GM12878 (cell line): ENCODE measurements at regions of chr13 and their contacts with region 1.

Region 1: DNA sequence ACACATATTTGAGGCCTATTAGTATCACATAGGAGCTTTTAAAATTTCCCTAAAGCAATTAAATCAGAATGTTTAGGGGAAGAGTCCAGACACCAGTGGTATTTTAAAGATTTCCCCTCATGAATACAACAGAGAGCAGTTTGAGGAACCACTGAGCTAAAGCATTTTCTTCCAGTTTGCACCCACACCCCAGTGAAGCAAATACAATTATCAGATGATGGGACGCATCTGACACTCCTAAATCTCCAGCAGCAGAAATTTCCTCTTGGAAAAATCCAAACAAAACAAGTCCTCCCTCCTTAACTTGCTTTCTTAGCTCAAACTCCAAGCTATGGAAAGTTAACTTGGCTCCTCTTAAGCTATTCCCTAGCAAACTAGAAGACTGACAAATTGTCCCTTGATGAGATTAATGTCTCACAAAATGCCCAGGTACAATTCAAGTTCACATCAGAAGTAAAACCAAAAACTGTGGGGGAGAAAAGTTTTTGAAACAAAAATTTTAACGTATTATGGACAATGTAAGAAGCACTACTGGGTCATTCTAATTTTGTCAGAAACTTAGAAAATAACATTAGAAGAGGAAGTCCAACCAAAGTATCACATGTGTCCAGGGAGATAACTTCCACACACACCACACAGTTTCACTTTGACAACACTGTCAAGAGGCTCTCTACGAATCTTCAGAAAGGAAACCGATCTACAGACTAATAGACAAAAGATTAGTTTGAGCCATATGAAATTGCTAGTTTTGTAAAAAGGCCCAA is 74.1 kb downstream of the ABCC4 start:
- DNase-seq: peak; percentile 88
- ATAC-seq: peak; percentile 88
- H3K4me3 ChIP-seq: peak overlapping the region; percentile 49; the same call in 1 of the 2 replicates
- H3K27ac ChIP-seq: peak overlapping the region; percentile 98
- H3K4me1 ChIP-seq: peaks cover 37% of the 10 kb centered on the region
- H3K27me3 ChIP-seq: no peaks in the 10 kb centered on the region
- CTCF ChIP-seq: no peak
- EP300 ChIP-seq: peak; percentile 51 to 57
- POLR2A ChIP-seq: no peak
- RAD21 ChIP-seq: no peak

Region 2: DNA sequence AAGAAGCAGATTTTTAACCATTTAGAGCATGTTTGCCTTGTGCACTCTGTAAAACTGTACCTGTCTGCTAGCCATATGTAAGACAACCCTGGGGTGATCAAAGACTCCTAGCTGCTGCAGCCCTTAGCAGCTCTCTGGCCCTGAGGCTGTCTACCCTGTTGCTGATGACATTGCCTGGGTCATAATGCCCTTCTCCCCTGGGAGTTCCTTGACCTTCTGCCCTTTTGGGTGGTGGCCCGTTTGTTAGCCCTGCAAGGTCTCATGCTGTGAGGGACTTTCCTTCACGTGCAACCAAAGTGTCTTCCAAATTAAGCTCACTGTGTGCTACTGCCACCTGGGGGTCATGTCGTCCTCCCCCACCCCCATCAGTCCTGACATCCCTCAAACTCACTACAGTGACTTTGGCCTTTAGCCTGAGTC is 1993.1 kb before region 1 on chr13:
- CTCF ChIA-PET with region 1: no interaction called
- POLR2A ChIA-PET with region 1: no interaction called
- RAD21 ChIA-PET with region 1: no interaction called
- SMC1A ChIA-PET with region 1: no interaction called
- in situ Hi-C with region 1: no loop called
- intact Hi-C with region 1: no loop called
- DNase-seq: no peak
- ATAC-seq: peak; percentile 64
- H3K4me3 ChIP-seq: no peak overlapping the region
- H3K27ac ChIP-seq: no peak overlapping the region
- H3K4me1 ChIP-seq: no peaks in the 10 kb centered on the region
- H3K27me3 ChIP-seq: no peaks in the 10 kb centered on the region
- CTCF ChIP-seq: peak in 2 of 3 experiments; percentile 19 to 37; a peak in 2 of 6 replicates
- EP300 ChIP-seq: no peak
- POLR2A ChIP-seq: no peak
- RAD21 ChIP-seq: no peak

Region 3: GRCh38 chr13:95207769-95208366 is 19.2 kb before region 1 on chr13:
- CTCF ChIA-PET with region 1: interaction called, 19 read pairs
- POLR2A ChIA-PET with region 1: interaction called, 8 read pairs
- RAD21 ChIA-PET with region 1: interaction called, 15 read pairs
- SMC1A ChIA-PET with region 1: interaction called, 56 read pairs
- in situ Hi-C with region 1: no loop called
- intact Hi-C with region 1: no loop called
- DNase-seq: no peak
- ATAC-seq: peak; percentile 95
- H3K4me3 ChIP-seq: peak overlapping the region; percentile 58; the same call in 1 of the 2 replicates
- H3K27ac ChIP-seq: peak overlapping the region; percentile 59
- H3K4me1 ChIP-seq: peaks cover 8% of the 10 kb centered on the region
- H3K27me3 ChIP-seq: no peaks in the 10 kb centered on the region
- CTCF ChIP-seq: no peak
- EP300 ChIP-seq: no peak
- POLR2A ChIP-seq: no peak
- RAD21 ChIP-seq: no peak

Region 4: DNA sequence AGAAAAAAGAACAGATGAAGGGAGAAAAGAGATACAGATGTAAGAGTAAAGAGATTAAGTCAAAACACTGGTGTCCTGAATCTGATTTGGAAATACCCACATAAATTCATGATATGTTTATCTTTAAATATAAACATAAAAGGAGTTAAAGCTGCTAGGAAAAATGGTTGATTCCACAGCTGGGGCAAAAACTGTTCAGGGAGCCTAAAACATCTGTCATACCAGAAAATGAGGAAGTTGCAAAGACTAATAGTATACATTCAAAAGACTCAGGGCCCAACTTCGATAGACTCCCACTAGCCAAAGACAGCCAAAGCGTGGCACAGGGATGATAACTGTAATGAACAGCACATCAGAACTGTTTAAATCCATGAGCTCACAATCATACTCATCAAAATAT is 12.2 kb after region 1 on chr13:
- CTCF ChIA-PET with region 1: interaction called, 10 read pairs
- POLR2A ChIA-PET with region 1: interaction called, 21 read pairs
- RAD21 ChIA-PET with region 1: interaction called, 55 read pairs
- SMC1A ChIA-PET with region 1: interaction called, 28 read pairs
- in situ Hi-C with region 1: no loop called
- intact Hi-C with region 1: no loop called
- DNase-seq: no peak
- ATAC-seq: peak; percentile 78
- H3K4me3 ChIP-seq: 0 out of 2 replicates have a peak overlapping the region, but pooled peaks have one; percentile 16
- H3K27ac ChIP-seq: peak overlapping the region; percentile 4
- H3K4me1 ChIP-seq: peaks cover 32% of the 10 kb centered on the region
- H3K27me3 ChIP-seq: no peaks in the 10 kb centered on the region
- CTCF ChIP-seq: no peak
- EP300 ChIP-seq: no peak
- POLR2A ChIP-seq: no peak
- RAD21 ChIP-seq: no peak

Region 5: DNA sequence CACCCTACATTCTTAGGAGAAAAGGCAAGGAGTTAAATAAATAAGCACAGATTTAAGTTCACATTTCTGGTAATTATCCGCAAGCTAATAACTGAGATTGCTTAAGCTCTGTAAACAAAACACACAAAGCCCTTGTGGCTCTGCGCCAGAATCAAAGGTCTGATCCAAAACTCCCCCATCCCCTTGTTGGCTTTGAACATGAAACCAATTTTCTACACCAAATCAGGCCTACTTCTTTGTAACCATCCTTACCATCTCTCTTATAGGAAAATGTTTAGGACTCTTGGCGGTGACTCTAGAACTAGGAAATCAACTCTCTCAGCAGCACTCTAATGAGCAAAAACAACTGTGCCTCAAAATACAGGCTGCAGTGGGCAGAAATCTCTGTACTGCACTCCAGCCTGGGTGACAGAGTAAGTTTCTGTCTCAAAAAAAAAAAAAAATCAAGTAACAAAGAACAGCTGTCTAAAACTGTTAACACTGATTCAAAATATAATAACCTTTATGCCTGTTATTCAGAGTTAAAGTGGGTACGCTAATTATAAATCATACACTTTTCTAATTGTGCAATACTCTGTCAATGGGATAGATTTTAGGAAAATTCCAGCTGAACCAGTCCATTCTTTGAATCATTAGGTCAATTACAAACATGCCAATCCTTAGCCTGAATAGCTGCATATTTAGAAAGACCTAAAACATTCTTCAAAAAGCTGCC is 48.4 kb after region 1 on chr13:
- CTCF ChIA-PET with region 1: interaction called, 4 read pairs
- POLR2A ChIA-PET with region 1: interaction called, 6 read pairs
- RAD21 ChIA-PET with region 1: interaction called, 3 read pairs
- SMC1A ChIA-PET with region 1: interaction called, 20 read pairs
- in situ Hi-C with region 1: no loop called
- intact Hi-C with region 1: no loop called
- DNase-seq: no peak
- ATAC-seq: no peak
- H3K4me3 ChIP-seq: no peak overlapping the region
- H3K27ac ChIP-seq: peak overlapping the region; percentile 29; the same call in 1 of the 2 replicates
- H3K4me1 ChIP-seq: peaks cover 20% of the 10 kb centered on the region
- H3K27me3 ChIP-seq: no peaks in the 10 kb centered on the region
- CTCF ChIP-seq: no peak
- EP300 ChIP-seq: no peak
- POLR2A ChIP-seq: no peak
- RAD21 ChIP-seq: no peak

Region 6: DNA sequence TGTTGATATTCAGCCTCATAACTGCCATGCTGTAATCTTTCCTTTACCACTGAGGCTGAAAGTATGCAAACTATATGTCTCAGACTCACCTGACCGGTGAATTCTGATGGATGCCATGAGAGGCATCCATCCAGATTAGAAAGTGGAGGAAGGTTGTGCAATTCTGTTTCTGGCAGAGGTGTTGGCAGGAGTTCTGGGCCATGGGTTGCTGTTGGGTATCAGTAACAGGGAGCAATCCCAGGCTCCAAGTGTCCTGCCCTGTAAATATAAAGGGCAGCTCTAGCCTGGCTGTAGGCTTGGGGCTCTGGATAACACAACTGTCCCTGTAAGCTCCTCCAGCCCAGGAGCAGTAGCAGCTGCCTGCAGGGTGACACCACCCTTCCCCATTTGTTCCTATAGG is 151.5 kb after region 1 on chr13:
- CTCF ChIA-PET with region 1: interaction called, 14 read pairs
- POLR2A ChIA-PET with region 1: no interaction called
- RAD21 ChIA-PET with region 1: interaction called, 11 read pairs
- SMC1A ChIA-PET with region 1: interaction called, 19 read pairs
- in situ Hi-C with region 1: no loop called
- intact Hi-C with region 1: no loop called
- DNase-seq: no peak
- ATAC-seq: no peak
- H3K4me3 ChIP-seq: no peak overlapping the region
- H3K27ac ChIP-seq: no peak overlapping the region
- H3K4me1 ChIP-seq: peaks cover 16% of the 10 kb centered on the region
- H3K27me3 ChIP-seq: no peaks in the 10 kb centered on the region
- CTCF ChIP-seq: no peak
- EP300 ChIP-seq: no peak
- POLR2A ChIP-seq: no peak
- RAD21 ChIP-seq: no peak

Region 7: GRCh38 chr13:95734124-95734523 is 507.0 kb after region 1 on chr13:
- CTCF ChIA-PET with region 1: no interaction called
- POLR2A ChIA-PET with region 1: no interaction called
- RAD21 ChIA-PET with region 1: no interaction called
- SMC1A ChIA-PET with region 1: no interaction called
- in situ Hi-C with region 1: no loop called
- intact Hi-C with region 1: no loop called
- DNase-seq: no peak
- ATAC-seq: no peak
- H3K4me3 ChIP-seq: no peak overlapping the region
- H3K27ac ChIP-seq: no peak overlapping the region
- H3K4me1 ChIP-seq: no peaks in the 10 kb centered on the region
- H3K27me3 ChIP-seq: no peaks in the 10 kb centered on the region
- CTCF ChIP-seq: no peak
- EP300 ChIP-seq: no peak
- POLR2A ChIP-seq: no peak
- RAD21 ChIP-seq: no peak